IMR-90 (cell line): ENCODE measurements at regions of chr19 and their contacts with region 1.

Region 1: GRCh38 chr19:49182848-49183344 is 25.3 kb downstream of the TRPM4 start:
- DNase-seq: no peak
- ATAC-seq: no peak
- H3K4me3 ChIP-seq: no peak overlapping the region
- H3K27ac ChIP-seq: no peak overlapping the region
- H3K4me1 ChIP-seq: no peaks in the 10 kb centered on the region
- H3K27me3 ChIP-seq: no peaks in the 10 kb centered on the region
- CTCF ChIP-seq: no peak
- POLR2A ChIP-seq: no peak
- RAD21 ChIP-seq: no peak

Region 2: GRCh38 chr19:49165111-49165750 is 17.7 kb before region 1 on chr19:
- CTCF ChIA-PET with region 1: no interaction called
- POLR2A ChIA-PET with region 1: interaction called, 10 read pairs
- dilution Hi-C with region 1: no loop called
- in situ Hi-C with region 1: no loop called
- intact Hi-C with region 1: no loop called
- DNase-seq: no peak
- ATAC-seq: no peak
- H3K4me3 ChIP-seq: no peak overlapping the region
- H3K27ac ChIP-seq: no peak overlapping the region
- H3K4me1 ChIP-seq: no peaks in the 10 kb centered on the region
- H3K27me3 ChIP-seq: no peaks in the 10 kb centered on the region
- CTCF ChIP-seq: no peak
- POLR2A ChIP-seq: no peak
- RAD21 ChIP-seq: no peak

Region 3: DNA sequence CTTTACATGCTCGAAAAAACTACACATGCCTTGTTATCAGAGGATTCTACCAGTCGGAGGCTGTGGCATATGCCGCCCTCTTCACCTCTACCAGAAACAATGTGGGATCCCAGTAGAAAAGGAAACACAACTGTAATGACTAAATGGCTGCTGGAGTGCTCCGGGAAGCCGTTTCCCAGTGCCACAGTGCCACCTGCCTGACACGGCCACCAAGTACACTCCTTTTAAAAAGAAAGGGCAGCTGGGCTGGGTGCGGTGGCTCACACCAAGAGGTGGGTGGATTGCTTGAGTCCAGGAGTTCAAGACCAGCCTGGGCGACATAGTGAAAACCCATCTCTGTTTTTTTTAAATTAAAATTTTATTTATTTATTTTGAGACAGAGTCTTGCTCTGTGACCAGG is 42.0 kb after region 1 on chr19:
- CTCF ChIA-PET with region 1: no interaction called
- POLR2A ChIA-PET with region 1: no interaction called
- dilution Hi-C with region 1: no loop called
- in situ Hi-C with region 1: no loop called
- intact Hi-C with region 1: no loop called
- DNase-seq: peak; percentile 57
- ATAC-seq: peak; percentile 79
- H3K4me3 ChIP-seq: no peak overlapping the region
- H3K27ac ChIP-seq: no peak overlapping the region
- H3K4me1 ChIP-seq: no peaks in the 10 kb centered on the region
- H3K27me3 ChIP-seq: peaks cover 3% of the 10 kb centered on the region; the same call in 1 of the 2 replicates
- CTCF ChIP-seq: peak; percentile 60
- POLR2A ChIP-seq: no peak
- RAD21 ChIP-seq: peak; percentile 67